ENCODE measurements at regions of chr1 and their contacts with region 1.

Region 1: DNA sequence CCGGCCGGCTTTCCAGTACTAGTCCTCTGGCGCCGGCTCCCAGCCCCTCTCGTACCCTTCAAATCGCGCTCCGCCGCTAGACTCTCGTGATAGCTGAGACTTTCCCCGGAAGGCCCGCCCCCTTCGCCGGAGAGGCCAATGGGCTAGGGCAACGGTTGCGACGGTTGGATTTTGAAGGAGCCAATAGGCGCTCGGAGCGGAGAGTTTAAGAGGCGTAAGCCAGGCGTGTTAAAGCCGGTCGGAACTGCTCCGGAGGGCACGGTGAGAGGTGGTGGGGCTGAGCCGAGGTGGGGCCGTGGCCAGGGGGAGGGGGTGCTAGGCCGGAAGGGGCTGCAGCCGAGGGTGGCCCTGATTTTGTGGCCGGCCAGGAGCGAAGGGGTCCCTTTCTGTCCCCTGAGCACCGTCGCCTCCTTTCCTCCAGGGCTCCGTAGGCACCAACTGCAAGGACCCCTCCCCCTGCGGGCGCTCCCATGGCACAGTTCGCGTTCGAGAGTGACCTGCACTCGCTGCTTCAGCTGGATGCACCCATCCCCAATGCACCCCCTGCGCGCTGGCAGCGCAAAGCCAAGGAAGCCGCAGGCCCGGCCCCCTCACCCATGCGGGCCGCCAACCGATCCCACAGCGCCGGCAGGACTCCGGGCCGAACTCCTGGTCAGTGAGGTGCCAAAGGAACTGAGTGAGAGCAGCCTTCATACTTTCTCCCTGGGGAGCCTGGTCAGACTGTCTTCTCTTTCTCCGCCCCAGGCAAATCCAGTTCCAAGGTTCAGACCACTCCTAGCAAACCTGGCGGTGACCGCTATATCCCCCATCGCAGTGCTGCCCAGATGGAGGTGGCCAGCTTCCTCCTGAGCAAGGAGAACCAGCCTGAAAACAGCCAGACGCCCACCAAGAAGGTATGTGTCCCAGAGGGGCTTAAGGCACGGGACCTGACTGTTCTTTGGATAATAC is at the start of gene CDC20:
- DNase-seq: peak; percentile 97 to 98
- H3K4me3 ChIP-seq: peak within 1 kb of the TSS; percentile 96
- H3K4me3 Mint-ChIP-seq: peak within 1 kb of the TSS; percentile 93
- H3K27ac Mint-ChIP-seq: peak within 1 kb of the TSS; percentile 97
- H3K4me1 ChIP-seq: peaks cover 24% of the 10 kb centered on the region
- H3K4me1 Mint-ChIP-seq: peaks cover 27% of the 10 kb centered on the region
- H3K27me3 ChIP-seq: no peaks in the 10 kb centered on the region
- H3K27me3 Mint-ChIP-seq: no peaks in the 10 kb centered on the region
- CTCF ChIP-seq: no peak
- total RNA-seq, gene CDC20: 123 and 125 TPM in 2 replicates

Region 2: DNA sequence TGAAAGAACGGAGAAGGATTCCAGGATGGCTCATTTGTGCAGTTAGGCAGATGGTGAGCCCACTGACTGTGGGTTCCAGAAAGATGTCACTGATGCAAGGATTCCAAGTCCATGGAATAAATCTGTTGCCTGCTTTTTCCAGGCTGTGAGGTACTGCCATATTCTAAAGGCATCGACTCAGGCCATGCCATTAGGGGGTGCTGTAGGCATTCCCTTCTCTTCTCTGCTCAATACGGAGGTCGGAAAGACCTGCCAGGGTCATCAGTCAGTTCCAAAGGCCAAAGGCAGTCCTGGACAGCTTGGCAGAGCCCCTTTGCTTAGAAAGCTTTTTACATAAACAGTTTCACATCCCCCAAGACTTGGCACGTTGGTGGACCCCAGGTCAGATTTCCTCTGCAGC is 120.9 kb before region 1 on chr1:
- CTCF ChIA-PET with region 1: interaction called, 5 read pairs
- POLR2A ChIA-PET with region 1: no interaction called
- intact Hi-C with region 1: loop called (anchors 1 kb)
- DNase-seq: peak; percentile 72 to 73
- H3K4me3 ChIP-seq: no peak overlapping the region
- H3K4me3 Mint-ChIP-seq: no peak overlapping the region
- H3K27ac Mint-ChIP-seq: no peak overlapping the region
- H3K4me1 ChIP-seq: no peaks in the 10 kb centered on the region
- H3K4me1 Mint-ChIP-seq: no peaks in the 10 kb centered on the region
- H3K27me3 ChIP-seq: no peaks in the 10 kb centered on the region
- H3K27me3 Mint-ChIP-seq: no peaks in the 10 kb centered on the region
- CTCF ChIP-seq: peak; percentile 39 to 69

Region 3: GRCh38 chr1:43285269-43285990 is 73.6 kb before region 1 on chr1 and contains the start of gene C1orf210:
- CTCF ChIA-PET with region 1: interaction called, 13 read pairs
- POLR2A ChIA-PET with region 1: interaction called, 8 read pairs
- intact Hi-C with region 1: loop called (anchors 2 kb)
- DNase-seq: peak; percentile 93 to 94
- H3K4me3 ChIP-seq: peak within 1 kb of the TSS; percentile 53
- H3K4me3 Mint-ChIP-seq: peak within 1 kb of the TSS; percentile 92
- H3K27ac Mint-ChIP-seq: peak within 1 kb of the TSS; percentile 93
- H3K4me1 ChIP-seq: peaks cover 20% of the 10 kb centered on the region
- H3K4me1 Mint-ChIP-seq: peaks cover 15% of the 10 kb centered on the region
- H3K27me3 ChIP-seq: no peaks in the 10 kb centered on the region
- H3K27me3 Mint-ChIP-seq: no peaks in the 10 kb centered on the region
- CTCF ChIP-seq: peak in 1 of 2 experiments; percentile 71
- total RNA-seq, gene C1orf210: 7.8 and 9.6 TPM in 2 replicates

Region 4: GRCh38 chr1:43329995-43330751 is 28.8 kb before region 1 on chr1:
- CTCF ChIA-PET with region 1: no interaction called
- POLR2A ChIA-PET with region 1: no interaction called
- intact Hi-C with region 1: no loop called
- DNase-seq: no peak
- H3K4me3 ChIP-seq: no peak overlapping the region
- H3K4me3 Mint-ChIP-seq: no peak overlapping the region
- H3K27ac Mint-ChIP-seq: no peak overlapping the region
- H3K4me1 ChIP-seq: no peaks in the 10 kb centered on the region
- H3K4me1 Mint-ChIP-seq: no peaks in the 10 kb centered on the region
- H3K27me3 ChIP-seq: no peaks in the 10 kb centered on the region
- H3K27me3 Mint-ChIP-seq: no peaks in the 10 kb centered on the region
- CTCF ChIP-seq: no peak

Region 5: DNA sequence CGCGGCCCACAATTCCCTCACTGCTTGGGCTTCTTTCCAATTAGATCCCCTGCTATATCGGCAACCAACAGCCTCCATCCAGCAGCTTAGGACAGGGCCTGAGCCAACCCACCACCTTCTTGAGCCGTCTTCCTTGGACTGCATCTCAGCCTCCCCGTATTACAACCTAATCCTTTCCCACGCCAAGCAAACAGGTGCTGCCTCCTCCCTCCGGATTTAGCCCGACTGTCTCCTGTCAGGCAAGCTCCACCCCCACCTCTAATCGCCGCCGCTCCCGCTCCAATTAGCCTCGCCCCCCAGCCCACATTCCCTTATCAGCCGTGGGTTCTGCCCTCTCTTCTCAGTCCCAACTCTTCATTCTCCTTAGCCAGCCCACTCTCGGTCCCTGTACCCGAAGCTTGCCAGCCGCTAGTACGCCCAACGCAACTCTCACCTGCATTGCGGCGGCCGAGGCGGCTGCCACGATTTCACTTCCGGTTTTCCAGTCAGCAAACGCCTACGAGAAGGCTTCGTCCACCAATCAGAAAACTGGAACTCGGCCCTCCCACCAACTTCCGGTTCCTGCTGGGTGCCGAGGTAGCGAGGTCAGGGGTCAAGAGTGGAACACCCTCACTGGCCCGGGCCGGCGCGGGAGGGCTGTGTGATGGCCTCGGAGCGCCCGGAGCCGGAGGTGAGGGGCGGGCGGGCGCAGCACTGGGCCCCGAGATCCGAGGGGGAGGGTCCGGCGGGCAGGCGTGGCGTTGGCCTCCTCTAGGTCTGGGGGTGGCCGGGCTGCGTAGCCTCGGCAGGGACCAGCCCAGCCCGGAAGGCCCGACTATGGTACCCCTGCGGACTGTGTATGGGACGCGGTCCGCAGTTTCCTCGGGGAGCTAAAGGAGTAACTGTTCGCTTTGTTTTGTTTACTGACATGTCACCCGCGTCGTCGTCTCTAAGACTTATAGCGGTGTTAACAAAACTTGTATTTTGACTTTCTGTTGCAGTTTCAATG is 30.6 kb after region 1 on chr1 and contains the starts of genes MED8 and SZT2:
- CTCF ChIA-PET with region 1: interaction called, 3 read pairs
- POLR2A ChIA-PET with region 1: interaction called, 15 read pairs
- intact Hi-C with region 1: no loop called
- DNase-seq: peak; percentile 96
- H3K4me3 ChIP-seq: peak within 1 kb of the TSS; percentile 59
- H3K4me3 Mint-ChIP-seq: peak within 1 kb of the TSS; percentile 88
- H3K27ac Mint-ChIP-seq: peak within 1 kb of the TSS; percentile 95
- H3K4me1 ChIP-seq: no peaks in the 10 kb centered on the region
- H3K4me1 Mint-ChIP-seq: peaks cover 15% of the 10 kb centered on the region
- H3K27me3 ChIP-seq: no peaks in the 10 kb centered on the region
- H3K27me3 Mint-ChIP-seq: no peaks in the 10 kb centered on the region
- CTCF ChIP-seq: no peak
- total RNA-seq, gene MED8: 33.3 and 35.8 TPM in 2 replicates
- total RNA-seq, gene SZT2: 29.0 and 31.6 TPM in 2 replicates

Region 6: GRCh38 chr1:43405219-43405875 is 46.3 kb after region 1 on chr1:
- CTCF ChIA-PET with region 1: no interaction called
- POLR2A ChIA-PET with region 1: no interaction called
- intact Hi-C with region 1: no loop called
- DNase-seq: no peak
- H3K4me3 ChIP-seq: no peak overlapping the region
- H3K4me3 Mint-ChIP-seq: no peak overlapping the region
- H3K27ac Mint-ChIP-seq: no peak overlapping the region
- H3K4me1 ChIP-seq: no peaks in the 10 kb centered on the region
- H3K4me1 Mint-ChIP-seq: no peaks in the 10 kb centered on the region
- H3K27me3 ChIP-seq: no peaks in the 10 kb centered on the region
- H3K27me3 Mint-ChIP-seq: no peaks in the 10 kb centered on the region
- CTCF ChIP-seq: no peak

Region 7: DNA sequence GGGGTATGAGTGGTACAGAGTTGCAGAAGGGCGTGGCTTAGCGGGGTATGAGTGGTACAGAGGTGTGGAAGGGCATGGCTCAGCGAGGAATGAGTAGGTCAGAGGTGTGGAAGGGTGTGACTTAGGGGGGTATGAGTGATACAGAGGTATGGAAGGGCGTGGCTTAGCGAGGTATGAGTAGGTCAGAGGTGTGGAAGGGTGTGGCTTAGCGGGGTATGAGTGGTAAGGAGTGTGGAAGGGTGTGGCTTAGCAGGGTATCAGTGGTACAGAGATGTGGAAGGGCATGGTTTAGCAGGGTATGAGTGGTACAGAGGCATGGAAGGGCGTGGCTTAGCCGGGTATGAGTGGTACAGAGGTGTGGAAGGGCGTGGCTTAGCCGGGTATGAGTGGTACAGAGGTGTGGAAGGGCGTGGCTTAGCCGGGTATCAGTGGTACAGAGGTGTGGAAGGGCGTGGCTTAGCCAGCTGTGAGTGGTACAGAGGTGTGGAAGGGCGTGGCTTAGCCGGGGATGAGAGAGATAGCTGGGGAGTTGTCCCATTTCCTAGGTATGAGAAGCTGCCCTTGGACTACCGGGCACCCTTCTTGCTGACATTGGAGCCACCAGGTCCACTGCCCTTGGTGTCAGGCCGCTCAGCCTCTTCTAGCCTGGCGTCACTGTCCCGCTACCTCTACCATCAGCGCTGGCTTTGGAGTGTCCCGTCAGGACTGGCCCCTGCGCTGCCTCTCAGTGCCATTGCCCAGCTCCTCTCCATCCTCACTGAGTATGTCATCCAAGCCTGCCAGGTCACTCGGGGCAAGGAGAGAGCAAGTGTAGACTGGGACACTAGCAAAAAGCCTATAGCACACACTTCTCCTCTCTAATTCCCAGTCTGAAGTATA is 64.9 kb after region 1 on chr1:
- CTCF ChIA-PET with region 1: no interaction called
- POLR2A ChIA-PET with region 1: no interaction called
- intact Hi-C with region 1: no loop called
- DNase-seq: no peak
- H3K4me3 ChIP-seq: no peak overlapping the region
- H3K4me3 Mint-ChIP-seq: no peak overlapping the region
- H3K27ac Mint-ChIP-seq: no peak overlapping the region
- H3K4me1 ChIP-seq: no peaks in the 10 kb centered on the region
- H3K4me1 Mint-ChIP-seq: no peaks in the 10 kb centered on the region
- H3K27me3 ChIP-seq: no peaks in the 10 kb centered on the region
- H3K27me3 Mint-ChIP-seq: no peaks in the 10 kb centered on the region
- CTCF ChIP-seq: no peak